ENCODE measurements at regions of chr1 and their contacts with region 1.

Region 1: DNA sequence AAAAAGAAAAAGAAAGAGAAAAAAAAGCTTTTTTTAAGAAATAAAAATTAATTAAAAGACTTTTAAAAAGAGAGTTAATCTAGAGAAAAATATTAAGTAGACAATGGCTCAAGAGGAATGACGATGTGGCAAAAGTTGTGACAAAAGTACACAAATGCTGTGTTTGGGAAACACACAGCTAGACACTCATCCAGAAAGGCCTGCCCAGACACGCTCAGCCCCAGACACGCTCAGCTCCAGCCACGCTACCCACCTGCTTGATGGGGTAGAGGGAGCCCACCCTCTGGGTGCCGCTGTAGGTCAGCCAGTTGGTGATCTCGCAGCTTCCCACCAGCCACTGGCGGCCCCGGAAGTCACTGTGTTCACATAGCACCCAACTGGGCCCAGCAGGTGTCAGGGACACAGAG is 10.2 kb downstream of the CD52 start:
- DNase-seq: no peak
- H3K4me3 ChIP-seq: no peak overlapping the region
- H3K27ac ChIP-seq: no peak overlapping the region
- H3K4me1 ChIP-seq: no peaks in the 10 kb centered on the region
- H3K27me3 ChIP-seq: no peaks in the 10 kb centered on the region
- CTCF ChIP-seq: no peak

Region 2: GRCh38 chr1:26083246-26083645 is 244.7 kb before region 1 on chr1:
- CTCF ChIA-PET with region 1: no interaction called
- POLR2A ChIA-PET with region 1: no interaction called
- intact Hi-C with region 1: no loop called
- DNase-seq: peak in 1 of 2 experiments; percentile 85
- H3K4me3 ChIP-seq: 0 out of 2 replicates have a peak overlapping the region, but pooled peaks have one; percentile 10
- H3K27ac ChIP-seq: peak overlapping the region; percentile 38
- H3K4me1 ChIP-seq: peaks cover 47% of the 10 kb centered on the region
- H3K27me3 ChIP-seq: no peaks in the 10 kb centered on the region
- CTCF ChIP-seq: no peak

Region 3: DNA sequence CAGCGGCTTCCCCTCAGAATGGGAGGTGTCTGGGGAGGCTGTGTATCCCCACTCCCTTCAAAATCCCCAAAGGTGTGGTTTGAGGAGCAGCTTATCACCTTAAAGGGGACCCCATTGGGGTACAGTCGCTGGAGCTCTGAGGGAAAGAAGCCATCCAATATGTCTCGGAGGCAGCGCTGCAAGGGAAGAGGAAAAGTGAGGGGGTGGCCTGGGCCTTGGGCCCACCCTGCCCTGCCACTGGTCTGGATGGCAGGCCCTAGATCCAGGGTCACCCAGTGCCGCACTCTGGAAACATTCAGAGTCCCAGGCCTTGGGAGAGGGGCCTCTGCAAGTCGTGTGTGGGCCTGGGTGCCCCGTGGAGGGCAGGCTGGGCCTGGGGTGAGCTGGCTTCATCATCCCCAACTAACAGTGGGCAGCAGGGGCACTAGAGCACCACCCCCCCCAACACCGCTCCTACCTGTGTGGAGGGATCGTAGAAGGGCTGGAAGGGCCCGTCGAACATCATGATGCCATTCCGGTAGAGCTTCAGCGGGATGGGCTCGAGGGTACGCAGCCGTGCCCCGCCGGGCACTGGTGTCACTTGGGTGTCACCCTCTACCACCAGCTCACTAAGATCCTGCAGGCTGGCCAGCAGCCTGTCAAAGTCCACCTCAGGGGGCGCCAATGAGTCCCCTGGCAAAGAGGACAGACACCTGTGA is 42.4 kb before region 1 on chr1:
- CTCF ChIA-PET with region 1: no interaction called
- POLR2A ChIA-PET with region 1: no interaction called
- intact Hi-C with region 1: no loop called
- DNase-seq: peak in 1 of 2 experiments; percentile 34
- H3K4me3 ChIP-seq: no peak overlapping the region
- H3K27ac ChIP-seq: no peak overlapping the region
- H3K4me1 ChIP-seq: peaks cover 14% of the 10 kb centered on the region
- H3K27me3 ChIP-seq: no peaks in the 10 kb centered on the region
- CTCF ChIP-seq: peak; percentile 39

Region 4: GRCh38 chr1:26314501-26314900 is 13.5 kb before region 1 on chr1:
- CTCF ChIA-PET with region 1: interaction called, 4 read pairs
- POLR2A ChIA-PET with region 1: interaction called, 22 read pairs
- intact Hi-C with region 1: no loop called
- DNase-seq: no peak
- H3K4me3 ChIP-seq: no peak overlapping the region
- H3K27ac ChIP-seq: no peak overlapping the region
- H3K4me1 ChIP-seq: 0 out of 2 replicates have a peak, but pooled peaks cover 5% of the 10 kb centered on the region
- H3K27me3 ChIP-seq: no peaks in the 10 kb centered on the region
- CTCF ChIP-seq: no peak

Measured in PC-9 (cell line).